Heart left ventricle (tissue), 16 donors: ENCODE measurements at regions of chr13 and their contacts with region 1.

Region 1: DNA sequence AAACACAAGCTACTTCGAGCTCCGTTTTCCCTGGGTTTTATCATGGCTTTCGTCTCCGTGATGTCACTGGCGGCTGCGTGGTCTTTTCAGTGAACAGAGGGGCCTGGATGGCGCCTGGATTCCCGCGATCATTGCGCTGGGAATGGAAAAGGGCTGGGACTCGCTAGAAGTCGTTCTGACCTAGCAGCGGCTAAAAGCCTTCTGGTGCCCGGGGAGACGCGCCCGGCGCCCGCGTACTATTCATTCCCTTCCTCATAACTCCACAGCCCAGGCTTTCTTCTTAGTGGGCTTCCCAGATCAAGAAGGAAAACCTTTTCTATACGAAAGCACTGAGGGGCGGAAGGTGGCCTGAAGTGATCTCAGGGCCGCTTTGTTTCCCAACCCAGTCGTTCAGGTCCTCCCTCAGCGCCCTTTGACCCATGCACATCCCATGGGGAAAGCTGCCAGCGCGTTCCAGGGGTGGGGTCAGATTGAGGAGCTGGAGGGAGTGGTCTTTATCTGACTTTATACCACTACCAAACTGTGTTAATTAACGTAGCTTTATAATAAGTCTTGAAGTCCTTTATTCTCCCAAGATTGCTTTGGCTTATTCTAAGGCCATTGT is 96.6 kb downstream of the ELF1 start:
- DNase-seq: peak in 3 of 5 donors; percentile 13 to 62 (median 29)
- ATAC-seq: no peak
- H3K4me3 ChIP-seq: peak overlapping the region in 2 of 12 donors; percentile 4 to 76
- H3K27ac ChIP-seq: peak overlapping the region in 1 of 12 donors; percentile 88
- H3K4me1 ChIP-seq: peaks cover 0 to 16% (median 7%) of the 10 kb centered on the region in 12 donors
- H3K27me3 ChIP-seq: no peaks in the 10 kb centered on the region
- CTCF ChIP-seq: no peak
- POLR2A ChIP-seq: no peak

Region 2: GRCh38 chr13:40770934-40771618 is 151.5 kb before region 1 on chr13 and contains the start of gene MRPS31:
- intact Hi-C with region 1: loop called in 1 of 10 experiments (anchors 5 kb)
- DNase-seq: peak; percentile 95 to 98 (median 97)
- ATAC-seq: peak; percentile 99 to 100 (median 100)
- H3K4me3 ChIP-seq: peak within 1 kb of the TSS; percentile 58 to 90 (median 75)
- H3K27ac ChIP-seq: peak within 1 kb of the TSS; percentile 63 to 92 (median 84)
- H3K4me1 ChIP-seq: peaks cover 0 to 25% (median 13%) of the 10 kb centered on the region in 12 donors
- H3K27me3 ChIP-seq: no peaks in the 10 kb centered on the region
- CTCF ChIP-seq: no peak
- POLR2A ChIP-seq: peak in 1 of 2 donors; percentile 63
- total RNA-seq, gene MRPS31: 21.9 to 33.1 (median 27.1) TPM

Region 3: GRCh38 chr13:40982772-40983171 is 60.2 kb after region 1 on chr13:
- intact Hi-C with region 1: loop called in 1 of 10 experiments (anchors 10 kb)
- DNase-seq: peak in 4 of 5 donors; percentile 33 to 73 (median 49)
- ATAC-seq: peak; percentile 64 to 88 (median 72)
- H3K4me3 ChIP-seq: peak overlapping the region in 11 of 12 donors; percentile 24 to 57 (median 45)
- H3K27ac ChIP-seq: peak overlapping the region; percentile 73 to 95 (median 82)
- H3K4me1 ChIP-seq: peaks cover 20 to 91% (median 56%) of the 10 kb centered on the region in 12 donors
- H3K27me3 ChIP-seq: no peaks in the 10 kb centered on the region
- CTCF ChIP-seq: no peak
- POLR2A ChIP-seq: peak in 1 of 2 donors; percentile 30